CD14-positive monocyte (primary cell): ENCODE measurements at regions of chr19 and their contacts with region 1.

Region 1: DNA sequence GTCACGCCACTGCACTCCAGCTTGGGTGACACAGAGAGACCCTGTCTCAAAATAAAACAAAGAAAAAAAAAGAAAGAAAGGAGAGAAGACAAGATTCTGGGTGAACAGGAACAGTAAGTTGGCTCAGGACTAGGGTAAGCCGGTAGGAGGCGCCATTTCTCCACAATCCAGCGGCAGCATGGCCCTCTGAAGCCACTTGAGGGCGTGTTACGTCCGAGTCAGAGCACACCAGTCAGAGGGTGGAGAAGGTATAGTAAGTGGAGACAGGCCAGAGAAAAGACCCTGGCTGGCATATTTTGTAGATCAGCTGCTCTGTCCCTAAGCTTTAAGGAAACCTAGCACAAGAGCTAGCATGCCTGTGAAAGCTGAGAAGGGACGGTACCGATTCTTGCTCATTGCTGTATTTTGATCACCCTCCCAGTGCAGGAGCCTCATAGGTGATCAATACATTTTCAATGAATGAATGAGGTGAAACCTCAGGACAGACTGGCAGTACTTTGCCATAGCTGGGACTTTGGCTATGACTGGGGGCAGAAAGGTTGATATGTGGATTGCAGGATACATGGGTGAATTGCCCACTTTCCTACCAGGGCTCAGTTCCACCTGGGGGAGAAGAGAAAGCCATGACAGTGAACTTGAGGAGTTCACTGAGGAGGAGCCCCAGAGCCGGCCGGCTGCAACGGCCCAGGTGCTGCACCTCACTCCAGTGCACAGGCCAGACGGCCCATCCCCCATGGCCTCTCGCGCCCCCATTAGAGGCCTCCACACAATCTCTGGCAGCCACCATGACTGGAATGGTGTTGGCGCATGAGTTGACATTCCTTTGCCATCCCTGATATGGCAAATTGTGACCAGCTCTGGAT is 23.5 kb downstream of the POU2F2 start:
- DNase-seq: peak; percentile 86 to 91 (median 89)
- H3K4me3 ChIP-seq: no peak overlapping the region
- H3K4me3 Mint-ChIP-seq: no peak overlapping the region
- H3K27ac ChIP-seq: peak overlapping the region in 1 of 2 donors; percentile 28
- H3K27ac Mint-ChIP-seq: peak overlapping the region in 6 of 7 donors; percentile 58 to 72 (median 61)
- H3K4me1 ChIP-seq: peaks cover 0 to 13% of the 10 kb centered on the region in 2 donors
- H3K4me1 Mint-ChIP-seq: peaks cover 25% of the 10 kb centered on the region
- H3K27me3 ChIP-seq: no peaks in the 10 kb centered on the region
- H3K27me3 Mint-ChIP-seq: no peaks in the 10 kb centered on the region
- CTCF ChIP-seq: peak; percentile 100

Region 2: GRCh38 chr19:41999071-41999877 is 109.5 kb before region 1 on chr19:
- intact Hi-C with region 1: no loop called
- DNase-seq: no peak
- H3K4me3 ChIP-seq: no peak overlapping the region
- H3K4me3 Mint-ChIP-seq: peak overlapping the region in 1 of 2 donors; percentile 89
- H3K27ac ChIP-seq: no peak overlapping the region
- H3K27ac Mint-ChIP-seq: no peak overlapping the region
- H3K4me1 ChIP-seq: peaks cover 5 to 11% of the 10 kb centered on the region in 2 donors
- H3K4me1 Mint-ChIP-seq: peaks cover 10% of the 10 kb centered on the region
- H3K27me3 ChIP-seq: peaks cover 30 to 61% of the 10 kb centered on the region in 2 donors
- H3K27me3 Mint-ChIP-seq: peaks cover 64 to 73% (median 65%) of the 10 kb centered on the region in 3 donors
- CTCF ChIP-seq: no peak

Region 3: DNA sequence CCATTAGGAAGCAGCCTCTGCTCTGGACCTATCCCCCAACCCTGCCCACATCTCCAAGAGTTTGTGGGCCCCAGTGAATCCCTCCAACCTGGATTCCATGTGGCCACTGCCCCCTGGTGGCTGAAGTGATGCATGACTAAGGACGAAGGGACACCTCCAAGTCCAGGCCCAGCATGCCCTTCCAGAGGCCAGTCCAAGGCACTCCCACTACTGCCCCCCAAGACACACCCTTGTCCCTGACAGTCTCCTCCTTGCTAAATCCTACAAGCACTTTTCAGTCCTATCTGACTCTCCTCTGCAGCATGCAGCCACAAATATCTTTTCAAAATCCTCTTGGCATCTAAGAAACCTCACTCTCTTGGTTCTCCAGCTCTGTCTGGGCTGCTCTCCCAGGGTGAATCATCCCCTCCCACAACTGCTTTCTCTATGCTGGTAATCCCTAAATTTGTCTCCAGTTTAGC is 75.7 kb after region 1 on chr19:
- intact Hi-C with region 1: loop called in 1 of 2 experiments (anchors 5 kb)
- DNase-seq: peak; percentile 59 to 73 (median 72)
- H3K4me3 ChIP-seq: peak overlapping the region in 1 of 3 experiments; percentile 53
- H3K4me3 Mint-ChIP-seq: peak overlapping the region; percentile 3 to 65
- H3K27ac ChIP-seq: peak overlapping the region in 1 of 2 donors; percentile 62
- H3K27ac Mint-ChIP-seq: peak overlapping the region; percentile 71 to 91 (median 83)
- H3K4me1 ChIP-seq: peaks cover 52 to 61% of the 10 kb centered on the region in 2 donors
- H3K4me1 Mint-ChIP-seq: peaks cover 62% of the 10 kb centered on the region
- H3K27me3 ChIP-seq: peaks cover 11 to 14% of the 10 kb centered on the region in 2 donors
- H3K27me3 Mint-ChIP-seq: peaks cover 5 to 12% (median 9%) of the 10 kb centered on the region in 3 donors
- CTCF ChIP-seq: peak; percentile 96

Region 4: DNA sequence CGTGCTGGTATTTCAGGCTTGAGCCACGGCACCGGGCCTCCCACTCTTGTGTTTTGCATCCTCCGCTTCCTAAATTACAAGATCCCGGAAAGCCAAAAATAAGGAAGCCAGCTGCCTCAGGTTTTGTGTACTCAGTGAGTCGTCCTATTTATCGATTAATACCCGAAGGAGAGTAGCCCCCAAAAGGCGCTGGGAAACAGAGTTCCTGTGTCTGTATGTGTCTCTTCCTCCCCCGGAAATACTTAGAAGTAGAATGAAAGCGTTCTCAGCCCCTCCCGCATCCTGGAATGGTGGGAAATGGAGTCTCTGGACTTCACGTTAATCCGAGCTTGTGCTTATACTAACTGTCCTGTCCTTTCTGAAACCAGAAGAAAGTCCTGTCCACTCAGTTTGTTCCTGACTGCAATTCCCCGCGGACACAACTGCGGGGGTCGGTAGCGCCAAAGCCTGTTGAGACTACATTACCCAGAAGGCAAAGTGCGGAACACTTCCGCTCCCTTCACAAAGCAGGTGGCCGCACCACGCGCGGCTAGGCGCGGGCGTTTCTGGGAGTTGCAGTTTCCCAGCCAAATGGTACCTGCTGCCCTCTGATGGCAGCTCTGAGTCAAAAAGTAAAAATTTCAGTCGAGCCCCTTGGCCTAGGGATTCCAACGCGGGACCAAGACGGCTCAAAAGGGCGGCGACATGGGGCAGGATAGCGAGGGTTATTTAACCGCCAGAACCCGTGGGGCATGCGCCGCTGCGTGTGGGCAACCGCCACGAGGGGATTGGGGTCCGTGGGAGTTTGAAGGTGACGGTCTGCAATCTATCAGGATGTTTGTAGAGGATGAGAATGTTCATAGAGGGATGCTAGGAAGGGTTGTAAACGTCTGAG is 135.8 kb after region 1 on chr19:
- intact Hi-C with region 1: loop called (anchors 5 to 10 kb)
- DNase-seq: peak; percentile 90 to 94 (median 90)
- H3K4me3 ChIP-seq: peak overlapping the region; percentile 79 to 96 (median 84)
- H3K4me3 Mint-ChIP-seq: peak overlapping the region; percentile 95 to 99
- H3K27ac ChIP-seq: peak overlapping the region; percentile 61 to 76
- H3K27ac Mint-ChIP-seq: peak overlapping the region; percentile 96 to 98 (median 97)
- H3K4me1 ChIP-seq: peaks cover 37 to 44% of the 10 kb centered on the region in 2 donors
- H3K4me1 Mint-ChIP-seq: peaks cover 48% of the 10 kb centered on the region
- H3K27me3 ChIP-seq: no peaks in the 10 kb centered on the region
- H3K27me3 Mint-ChIP-seq: peaks cover 0 to 4% (median 3%) of the 10 kb centered on the region in 3 donors
- CTCF ChIP-seq: peak; percentile 68

Region 5: GRCh38 chr19:42325273-42325895 is 216.6 kb after region 1 on chr19 and contains the start of gene MEGF8:
- intact Hi-C with region 1: loop called (anchors 1 to 5 kb)
- DNase-seq: peak; percentile 96 to 98 (median 98)
- H3K4me3 ChIP-seq: peak within 1 kb of the TSS; percentile 55 to 96 (median 85)
- H3K4me3 Mint-ChIP-seq: peak within 1 kb of the TSS; percentile 84 to 93
- H3K27ac ChIP-seq: peak within 1 kb of the TSS; percentile 5 to 65
- H3K27ac Mint-ChIP-seq: peak within 1 kb of the TSS; percentile 21 to 74 (median 50)
- H3K4me1 ChIP-seq: peaks cover 14 to 27% of the 10 kb centered on the region in 2 donors
- H3K4me1 Mint-ChIP-seq: peaks cover 31% of the 10 kb centered on the region
- H3K27me3 ChIP-seq: peaks cover 24 to 32% of the 10 kb centered on the region in 2 donors
- H3K27me3 Mint-ChIP-seq: peaks cover 38 to 49% (median 44%) of the 10 kb centered on the region in 3 donors
- CTCF ChIP-seq: peak; percentile 80
- polyA plus RNA-seq, gene MEGF8: 0.15 to 2.7 (median 0.27) TPM

Region 6: DNA sequence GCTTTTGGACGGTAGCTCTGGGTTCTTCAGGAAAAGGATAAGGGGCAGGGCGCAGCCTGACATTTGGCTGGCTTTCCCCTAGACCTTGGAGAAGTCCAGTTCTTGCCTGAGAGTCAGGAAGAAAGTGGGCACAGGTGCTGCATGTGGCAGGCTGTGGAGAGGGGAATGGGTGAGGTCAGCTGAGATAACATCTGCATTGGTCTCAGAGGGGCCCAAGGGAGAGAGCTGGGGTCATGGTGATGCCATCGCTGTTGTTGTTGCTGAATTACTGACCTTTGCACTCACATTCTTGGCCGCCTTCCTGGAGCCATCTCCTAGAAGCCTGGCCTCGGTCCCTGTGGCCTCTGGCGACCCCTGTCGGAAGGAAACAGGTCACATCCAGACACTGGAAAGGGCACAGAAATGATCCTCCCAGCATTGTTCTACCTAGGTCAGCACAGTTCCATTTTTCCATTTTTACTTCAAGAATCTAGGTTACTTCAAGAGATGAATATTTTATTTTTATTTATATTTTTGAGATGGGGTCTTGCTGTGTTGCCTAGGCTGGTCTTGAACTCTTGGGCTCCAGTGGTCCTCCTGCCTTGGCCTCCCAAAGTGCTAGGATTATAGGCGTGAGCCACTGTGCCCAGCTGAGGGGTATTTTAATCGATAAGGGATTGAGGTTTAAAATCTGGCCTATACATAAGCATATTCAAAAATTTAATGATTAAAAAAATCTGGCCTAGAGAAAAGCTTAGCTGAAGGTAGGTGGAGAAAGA is 324.9 kb after region 1 on chr19:
- intact Hi-C with region 1: loop called in 1 of 2 experiments (anchors 2 kb)
- DNase-seq: peak in 2 of 3 donors; percentile 38 to 42
- H3K4me3 ChIP-seq: no peak overlapping the region
- H3K4me3 Mint-ChIP-seq: no peak overlapping the region
- H3K27ac ChIP-seq: no peak overlapping the region
- H3K27ac Mint-ChIP-seq: no peak overlapping the region
- H3K4me1 ChIP-seq: no peaks in the 10 kb centered on the region
- H3K4me1 Mint-ChIP-seq: peaks cover 8% of the 10 kb centered on the region
- H3K27me3 ChIP-seq: no peaks in the 10 kb centered on the region
- H3K27me3 Mint-ChIP-seq: peaks cover 0 to 10% (median 1%) of the 10 kb centered on the region in 3 donors
- CTCF ChIP-seq: peak; percentile 76